ENCODE measurements at regions of chr6 and their contacts with region 1.

Region 1: GRCh38 chr6:164106345-164106769 is 691.8 kb downstream of the QKI start:
- DNase-seq: peak in 4 of 5 donors; percentile 74 to 86 (median 80)
- ATAC-seq: peak; percentile 38 to 57 (median 49)
- H3K4me3 ChIP-seq: peak overlapping the region in 10 of 12 donors; percentile 4 to 43 (median 34)
- H3K27ac ChIP-seq: peak overlapping the region; percentile 77 to 97 (median 93)
- H3K4me1 ChIP-seq: peaks cover 0 to 62% (median 38%) of the 10 kb centered on the region in 12 donors
- H3K27me3 ChIP-seq: no peaks in the 10 kb centered on the region
- CTCF ChIP-seq: peak; percentile 32 to 73 (median 62)
- POLR2A ChIP-seq: no peak

Region 2: GRCh38 chr6:163189609-163190008 is 916.7 kb before region 1 on chr6:
- intact Hi-C with region 1: loop called in 8 of 10 experiments (anchors 5 to 10 kb)
- DNase-seq: no peak
- ATAC-seq: no peak
- H3K4me3 ChIP-seq: no peak overlapping the region
- H3K27ac ChIP-seq: no peak overlapping the region
- H3K4me1 ChIP-seq: peaks cover 0 to 14% (median 9%) of the 10 kb centered on the region in 12 donors
- H3K27me3 ChIP-seq: no peaks in the 10 kb centered on the region
- CTCF ChIP-seq: no peak
- POLR2A ChIP-seq: no peak

Region 3: DNA sequence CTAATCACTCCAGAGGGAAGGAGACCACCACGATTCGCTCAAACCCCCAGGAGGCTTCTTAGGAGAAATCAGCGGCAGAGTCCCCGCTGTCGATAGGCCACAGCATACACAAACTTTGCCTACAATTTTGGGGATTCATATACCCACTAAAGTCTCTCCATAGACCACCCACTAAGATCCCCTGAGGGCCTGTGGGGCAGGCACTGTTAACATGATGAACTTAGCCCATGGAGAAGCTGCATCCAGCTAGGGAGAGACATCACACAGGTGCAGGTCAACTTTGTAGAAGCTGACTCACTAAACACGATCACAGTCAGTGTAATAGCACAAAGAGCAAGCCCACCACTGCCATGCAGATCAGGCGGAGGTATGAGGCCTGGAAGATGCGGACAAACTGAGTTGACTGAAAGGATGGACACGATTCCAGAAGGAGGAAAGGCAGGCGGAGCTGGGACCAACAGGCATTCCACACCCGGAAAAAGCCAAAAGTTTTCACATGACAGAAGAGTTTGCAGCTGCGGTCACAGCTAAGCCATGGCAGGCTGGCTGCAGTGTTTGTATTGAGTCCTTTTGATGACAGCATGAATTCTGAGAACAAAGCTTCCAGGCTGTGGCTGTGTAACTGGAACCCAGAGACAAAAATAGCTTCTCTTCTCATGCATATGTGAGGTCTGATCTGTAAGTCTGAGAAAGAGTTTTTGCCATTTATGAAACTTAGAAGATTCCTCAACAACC is 767.5 kb before region 1 on chr6:
- intact Hi-C with region 1: loop called in 4 of 10 experiments (anchors 5 to 10 kb)
- DNase-seq: peak; percentile 66 to 74 (median 70)
- ATAC-seq: peak; percentile 62 to 73 (median 68)
- H3K4me3 ChIP-seq: no peak overlapping the region
- H3K27ac ChIP-seq: peak overlapping the region; percentile 71 to 97 (median 90)
- H3K4me1 ChIP-seq: peaks cover 10 to 74% (median 59%) of the 10 kb centered on the region in 12 donors
- H3K27me3 ChIP-seq: no peaks in the 10 kb centered on the region
- CTCF ChIP-seq: no peak
- POLR2A ChIP-seq: no peak

Region 4: DNA sequence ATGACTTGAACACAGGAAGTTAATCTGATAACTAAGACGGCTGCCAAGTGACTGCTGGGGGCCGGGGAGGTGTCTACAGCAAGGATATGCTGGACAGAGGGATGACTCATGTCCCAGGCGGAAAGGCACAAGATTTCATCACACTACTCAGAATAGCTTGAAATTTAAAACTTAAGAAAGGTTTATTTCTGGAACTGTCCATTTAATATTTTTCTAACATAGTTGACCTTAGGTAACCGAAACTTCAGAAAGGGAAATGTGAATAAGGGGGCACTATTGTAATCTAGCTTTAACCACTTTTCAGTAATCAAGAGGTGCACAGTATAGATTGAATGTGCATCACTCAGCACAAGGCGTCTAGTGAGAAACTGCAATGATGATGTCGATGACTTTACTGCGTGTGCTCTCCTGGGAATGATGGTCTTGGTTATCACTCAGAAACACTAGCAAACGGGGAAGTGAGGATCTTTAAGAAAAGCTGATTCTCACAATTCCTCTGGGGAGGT is 520.4 kb before region 1 on chr6:
- intact Hi-C with region 1: loop called in 5 of 10 experiments (anchors 5 to 10 kb)
- DNase-seq: peak; percentile 54 to 82 (median 72)
- ATAC-seq: peak; percentile 47 to 88 (median 82)
- H3K4me3 ChIP-seq: peak overlapping the region in 1 of 12 donors; percentile 15
- H3K27ac ChIP-seq: peak overlapping the region in 9 of 12 donors; percentile 12 to 64 (median 39)
- H3K4me1 ChIP-seq: peaks cover 2 to 42% (median 19%) of the 10 kb centered on the region in 12 donors
- H3K27me3 ChIP-seq: no peaks in the 10 kb centered on the region
- CTCF ChIP-seq: no peak
- POLR2A ChIP-seq: no peak

Region 5: DNA sequence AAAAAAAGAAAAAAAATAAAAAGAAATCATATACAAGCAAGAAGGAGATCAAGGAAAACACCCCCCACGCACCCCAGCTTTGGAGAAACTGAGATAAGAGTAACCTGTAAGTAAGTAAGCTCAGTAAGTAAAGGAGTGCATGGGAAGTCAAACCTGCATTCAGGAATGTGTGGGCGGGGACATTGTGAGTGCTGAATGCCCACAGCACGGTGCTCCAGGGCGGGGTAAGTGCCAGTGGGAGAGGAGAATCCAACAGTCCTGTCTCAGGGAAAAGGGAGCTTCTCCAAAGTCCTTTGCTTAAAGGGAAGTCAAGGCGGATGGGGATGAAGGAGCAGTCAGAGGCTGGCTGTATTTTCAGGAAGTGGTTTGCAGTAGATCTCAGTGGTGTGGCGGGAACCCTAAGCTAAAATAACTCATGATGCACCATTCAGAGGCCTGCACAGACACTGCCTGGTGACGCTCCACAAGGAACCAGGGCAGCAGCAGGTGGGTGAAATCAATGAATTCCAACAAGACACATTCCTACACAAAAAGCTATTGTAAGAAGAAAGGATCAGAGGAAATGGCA is 323.8 kb before region 1 on chr6:
- intact Hi-C with region 1: loop called in 1 of 10 experiments (anchors 10 kb)
- DNase-seq: peak in 1 of 5 donors; percentile 26
- ATAC-seq: peak in 3 of 4 donors; percentile 38 to 57 (median 43)
- H3K4me3 ChIP-seq: no peak overlapping the region
- H3K27ac ChIP-seq: no peak overlapping the region
- H3K4me1 ChIP-seq: peaks cover 0 to 20% (median 4%) of the 10 kb centered on the region in 12 donors
- H3K27me3 ChIP-seq: no peaks in the 10 kb centered on the region
- CTCF ChIP-seq: no peak
- POLR2A ChIP-seq: no peak

Region 6: DNA sequence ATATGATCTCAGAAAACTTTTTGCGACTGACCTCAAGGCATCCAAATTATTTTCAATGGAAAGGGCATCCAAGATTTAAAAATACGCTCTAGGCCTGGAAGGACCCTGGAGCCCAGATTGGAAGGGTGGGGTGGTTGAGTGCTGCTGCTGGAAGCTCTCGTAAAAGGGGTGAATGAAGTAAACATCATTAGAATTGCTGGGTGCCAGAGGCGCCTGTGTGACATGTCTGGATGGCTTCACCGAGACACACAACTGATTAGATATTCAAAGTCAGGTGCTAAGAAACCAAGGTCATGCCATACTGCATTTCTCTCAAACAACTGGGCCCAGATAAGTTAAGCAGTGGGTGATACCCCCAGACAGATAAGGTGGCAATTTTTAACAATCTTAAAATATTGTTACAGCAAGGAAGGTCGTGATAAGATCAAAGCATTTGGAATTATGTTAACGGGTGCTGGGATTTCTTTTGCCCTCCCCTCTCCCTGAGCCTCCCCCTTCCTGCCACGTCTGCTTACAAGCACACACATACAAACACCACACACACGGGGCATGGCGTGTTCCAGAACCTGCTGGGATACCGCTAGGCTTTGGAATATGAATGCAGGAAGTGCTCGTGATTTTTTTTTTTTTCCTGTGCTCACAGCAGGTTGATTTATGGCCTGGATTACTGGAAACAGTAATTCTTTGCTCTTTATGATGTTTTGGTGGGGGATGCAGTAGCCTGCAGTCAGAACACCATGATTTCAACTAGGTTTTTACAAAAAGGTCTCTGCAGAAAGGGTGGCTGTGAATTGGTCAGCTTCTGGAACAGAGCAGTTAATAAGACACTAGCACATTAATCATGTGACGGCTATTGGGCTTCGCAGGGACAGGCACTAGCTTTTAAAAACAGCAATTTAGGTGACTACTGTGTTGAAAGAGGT is 140.7 kb before region 1 on chr6:
- intact Hi-C with region 1: loop called in 8 of 10 experiments (anchors 2 to 5 kb)
- DNase-seq: peak in 3 of 5 donors; percentile 59 to 74 (median 61)
- ATAC-seq: peak; percentile 47 to 66 (median 54)
- H3K4me3 ChIP-seq: no peak overlapping the region
- H3K27ac ChIP-seq: peak overlapping the region; percentile 77 to 98 (median 90)
- H3K4me1 ChIP-seq: peaks cover 0 to 50% (median 17%) of the 10 kb centered on the region in 12 donors
- H3K27me3 ChIP-seq: no peaks in the 10 kb centered on the region
- CTCF ChIP-seq: no peak
- POLR2A ChIP-seq: no peak

Region 7: GRCh38 chr6:164151161-164151728 is 44.9 kb after region 1 on chr6:
- intact Hi-C with region 1: no loop called
- DNase-seq: peak in 4 of 5 donors; percentile 54 to 71 (median 66)
- ATAC-seq: peak; percentile 47 to 73 (median 68)
- H3K4me3 ChIP-seq: peak overlapping the region in 1 of 12 donors; percentile 6
- H3K27ac ChIP-seq: peak overlapping the region in 11 of 12 donors; percentile 0 to 78 (median 57)
- H3K4me1 ChIP-seq: peaks cover 0 to 22% (median 8%) of the 10 kb centered on the region in 12 donors
- H3K27me3 ChIP-seq: no peaks in the 10 kb centered on the region
- CTCF ChIP-seq: no peak
- POLR2A ChIP-seq: no peak